Ascending aorta (tissue), 2 donors: ENCODE measurements at regions of chr14 and their contacts with region 1.

Region 1: GRCh38 chr14:76050797-76051392 is 65.3 kb downstream of the IFT43 start:
- DNase-seq: no peak
- H3K4me3 ChIP-seq: no peak overlapping the region
- H3K27ac ChIP-seq: no peak overlapping the region
- H3K4me1 ChIP-seq: no peaks in the 10 kb centered on the region
- H3K27me3 ChIP-seq: no peaks in the 10 kb centered on the region
- CTCF ChIP-seq: peak; percentile 75 to 80 (median 78)

Region 2: DNA sequence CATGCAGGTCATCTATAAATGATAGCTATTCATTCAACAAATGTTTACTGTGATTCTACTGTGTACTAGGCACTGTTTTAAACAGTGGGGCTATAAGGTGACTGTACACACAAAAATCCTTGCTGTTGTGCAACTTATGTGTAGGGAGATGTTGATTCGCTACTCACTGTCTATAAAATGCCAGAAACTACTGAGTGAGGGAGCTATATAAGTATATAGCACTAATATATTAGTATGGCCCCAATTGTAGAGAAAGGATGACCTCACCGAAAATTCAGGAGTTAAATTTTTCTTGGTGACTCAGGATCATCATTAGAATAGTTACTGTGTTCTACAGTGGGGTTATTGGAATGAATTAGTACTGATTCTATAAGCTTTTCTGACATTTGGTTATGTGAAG is 186.5 kb before region 1 on chr14:
- intact Hi-C with region 1: no loop called
- DNase-seq: no peak
- H3K4me3 ChIP-seq: no peak overlapping the region
- H3K27ac ChIP-seq: no peak overlapping the region
- H3K4me1 ChIP-seq: peaks cover 7 to 16% of the 10 kb centered on the region in 2 donors
- H3K27me3 ChIP-seq: no peaks in the 10 kb centered on the region
- CTCF ChIP-seq: no peak

Region 3: GRCh38 chr14:75906676-75907280 is 144.1 kb before region 1 on chr14:
- intact Hi-C with region 1: loop called (anchors 5 kb)
- DNase-seq: peak in 1 of 2 donors; percentile 79
- H3K4me3 ChIP-seq: peak overlapping the region in 1 of 2 donors; percentile 6
- H3K27ac ChIP-seq: peak overlapping the region; percentile 42 to 51
- H3K4me1 ChIP-seq: peaks cover 0 to 5% of the 10 kb centered on the region in 2 donors
- H3K27me3 ChIP-seq: no peaks in the 10 kb centered on the region
- CTCF ChIP-seq: peak; percentile 69 to 87 (median 85)

Region 4: GRCh38 chr14:76151398-76152339 is 100.8 kb after region 1 on chr14 and contains the start of gene GPATCH2L:
- intact Hi-C with region 1: no loop called
- DNase-seq: peak; percentile 85 to 98
- H3K4me3 ChIP-seq: peak within 1 kb of the TSS; percentile 91 to 96
- H3K27ac ChIP-seq: peak within 1 kb of the TSS; percentile 83 to 87
- H3K4me1 ChIP-seq: peaks cover 8 to 27% of the 10 kb centered on the region in 2 donors
- H3K27me3 ChIP-seq: no peaks in the 10 kb centered on the region
- CTCF ChIP-seq: no peak
- total RNA-seq, gene GPATCH2L: 40.3 TPM

Region 5: DNA sequence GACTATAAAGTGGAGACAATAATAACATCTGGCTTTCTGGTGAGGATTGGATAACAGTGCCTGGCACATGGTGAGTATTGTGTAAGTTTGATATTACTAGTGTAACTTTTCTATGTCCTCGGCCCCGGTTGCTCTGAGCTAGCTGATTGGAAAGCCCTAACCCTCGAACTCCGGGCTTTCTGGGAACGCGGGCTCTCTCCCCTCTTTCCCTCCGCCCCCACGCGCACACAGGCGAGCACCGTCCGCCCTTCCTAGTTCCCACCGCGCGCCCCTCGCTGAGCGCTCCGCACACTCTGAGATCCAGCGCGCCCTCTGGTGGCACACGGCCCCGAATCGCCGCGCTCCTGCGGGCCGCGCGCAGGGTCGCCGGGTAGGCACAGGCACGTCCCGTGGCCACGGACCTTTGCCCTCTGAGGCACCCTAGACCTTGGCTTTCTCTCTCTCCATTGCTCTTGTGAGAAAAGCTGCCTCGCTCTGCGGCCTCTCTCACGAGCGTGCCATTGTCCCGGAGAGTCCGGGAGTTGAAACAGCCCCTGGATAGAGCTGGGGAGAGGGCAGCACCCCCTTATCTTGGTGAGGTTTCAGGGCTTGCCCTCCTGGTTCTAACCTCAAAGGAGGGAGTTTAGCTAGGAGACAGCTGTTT is 301.9 kb after region 1 on chr14:
- intact Hi-C with region 1: loop called (anchors 2 kb)
- DNase-seq: no peak
- H3K4me3 ChIP-seq: peak overlapping the region; percentile 26 to 42
- H3K27ac ChIP-seq: no peak overlapping the region
- H3K4me1 ChIP-seq: no peaks in the 10 kb centered on the region
- H3K27me3 ChIP-seq: no peaks in the 10 kb centered on the region
- CTCF ChIP-seq: peak; percentile 64 to 84 (median 66)